Left cardiac atrium (tissue), 4 donors: ENCODE measurements at regions of chr10 and their contacts with region 1.

Region 1: DNA sequence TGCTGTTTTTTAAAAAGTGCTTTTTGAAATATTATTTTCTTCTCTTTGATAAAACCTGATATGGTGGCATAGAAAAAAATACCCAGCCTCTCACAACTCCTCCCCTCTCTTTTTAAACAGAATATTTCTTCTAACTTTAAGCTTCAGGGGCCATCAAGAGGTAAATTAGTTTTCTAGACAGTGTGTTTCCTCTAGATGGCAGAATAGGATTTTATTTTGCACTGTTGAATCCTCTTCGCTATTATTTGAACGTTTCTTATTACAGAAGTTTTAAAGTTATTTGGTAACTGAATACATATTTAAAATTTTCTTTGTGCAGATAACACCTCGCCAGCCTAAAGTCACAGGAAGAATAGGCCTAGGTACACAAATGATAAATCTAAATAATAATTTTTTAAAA is 30.3 kb downstream of the ARL5B start:
- DNase-seq: no peak
- ATAC-seq: no peak

Region 2: DNA sequence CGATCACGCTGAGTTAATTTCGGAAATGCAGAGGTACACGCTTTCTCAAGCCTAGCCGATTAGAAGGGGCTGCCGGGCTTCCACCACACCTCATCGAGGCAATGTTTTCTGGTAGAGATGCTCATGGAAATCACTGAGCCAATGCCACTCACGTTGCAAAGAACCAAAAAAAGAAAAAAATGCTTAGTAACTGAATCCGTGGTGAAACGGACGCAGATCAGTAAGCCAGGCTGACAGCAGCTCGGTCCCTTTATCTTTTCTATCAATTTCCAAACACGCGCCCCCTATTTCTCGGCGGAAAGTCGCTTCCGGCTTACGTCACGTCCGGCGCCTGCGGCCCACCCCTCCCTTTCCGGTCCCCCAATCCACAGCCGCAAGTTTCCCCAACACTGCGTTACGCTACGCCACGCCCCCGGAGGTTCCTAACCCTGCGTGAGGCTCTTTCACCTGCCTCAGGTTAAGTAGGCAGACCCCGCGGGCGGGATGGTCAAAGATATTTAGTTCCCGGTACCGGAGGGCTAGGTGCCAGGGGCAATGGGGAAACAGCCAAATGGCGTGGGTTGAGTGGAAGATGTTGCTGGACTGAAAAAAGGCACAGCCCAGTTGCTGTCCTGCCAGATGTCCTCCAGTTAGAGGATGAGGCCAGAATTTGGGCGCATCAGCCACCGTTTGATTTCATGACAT is 38.0 kb before region 1 on chr10 and contains the start of gene NSUN6:
- intact Hi-C with region 1: no loop called
- DNase-seq: peak; percentile 93
- ATAC-seq: peak; percentile 99
- total RNA-seq, gene NSUN6: 7.7 to 8.5 TPM

Region 3: GRCh38 chr10:18767981-18768380 is 78.5 kb after region 1 on chr10:
- intact Hi-C with region 1: no loop called
- DNase-seq: no peak
- ATAC-seq: no peak

Region 4: GRCh38 chr10:19788075-19788686 is 1098.7 kb after region 1 on chr10:
- intact Hi-C with region 1: loop called in 1 of 2 experiments (anchors 10 kb)
- DNase-seq: no peak
- ATAC-seq: no peak